ENCODE measurements at regions of chr5 and their contacts with region 1.

Region 1: DNA sequence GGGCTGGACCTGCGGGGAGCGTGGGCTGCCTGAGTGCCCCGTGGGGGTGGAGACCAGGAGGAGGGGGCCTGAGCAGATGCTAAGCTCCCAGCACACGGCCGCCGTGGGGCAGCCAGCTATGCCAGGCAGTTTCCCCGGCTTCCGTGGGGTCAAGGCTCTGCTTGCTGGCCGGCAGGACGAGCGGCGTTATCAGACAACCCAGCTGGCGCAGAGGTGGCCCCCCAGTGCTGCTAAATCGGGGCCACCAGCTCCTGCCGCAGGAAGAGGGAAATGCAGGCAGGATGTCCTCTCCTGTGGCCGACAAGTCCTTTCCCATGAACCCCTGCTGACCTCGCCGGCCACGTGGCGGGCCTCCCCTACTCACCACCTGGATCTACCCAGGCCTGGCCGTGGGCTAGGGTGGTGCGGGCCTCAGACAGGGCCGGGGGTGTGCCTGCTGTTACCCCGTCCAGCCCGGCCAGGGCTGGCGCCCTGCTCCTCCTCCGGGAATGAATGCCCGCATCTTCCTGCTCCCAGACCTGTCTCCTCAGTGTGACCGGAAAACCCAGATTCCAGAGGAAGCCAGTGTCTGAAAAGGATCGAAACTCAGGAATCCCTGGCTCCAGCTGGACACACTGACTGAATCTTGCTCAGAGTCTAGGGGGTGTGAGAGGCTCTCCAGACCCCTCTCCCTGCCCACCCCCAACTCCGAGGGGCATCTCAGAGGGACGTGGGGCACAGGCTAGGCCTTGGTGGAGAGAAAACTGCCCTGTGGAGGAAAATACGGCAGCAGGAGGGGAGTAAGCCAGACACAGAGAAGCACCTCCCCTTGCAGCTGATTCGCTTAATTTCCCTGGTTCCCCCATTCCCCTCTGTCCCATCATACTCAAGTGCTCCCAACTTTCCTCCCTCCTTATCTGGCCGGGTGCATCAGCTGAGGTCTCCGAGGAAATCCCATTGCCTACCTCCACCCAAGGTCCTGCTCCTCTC is 3.9 kb downstream of the FLT4 start:
- DNase-seq: no peak
- ATAC-seq: no peak
- H3K4me3 ChIP-seq: no peak overlapping the region
- H3K27ac ChIP-seq: no peak overlapping the region
- H3K4me1 ChIP-seq: no peaks in the 10 kb centered on the region
- H3K27me3 ChIP-seq: peaks cover 4% of the 10 kb centered on the region
- CTCF ChIP-seq: no peak

Region 2: DNA sequence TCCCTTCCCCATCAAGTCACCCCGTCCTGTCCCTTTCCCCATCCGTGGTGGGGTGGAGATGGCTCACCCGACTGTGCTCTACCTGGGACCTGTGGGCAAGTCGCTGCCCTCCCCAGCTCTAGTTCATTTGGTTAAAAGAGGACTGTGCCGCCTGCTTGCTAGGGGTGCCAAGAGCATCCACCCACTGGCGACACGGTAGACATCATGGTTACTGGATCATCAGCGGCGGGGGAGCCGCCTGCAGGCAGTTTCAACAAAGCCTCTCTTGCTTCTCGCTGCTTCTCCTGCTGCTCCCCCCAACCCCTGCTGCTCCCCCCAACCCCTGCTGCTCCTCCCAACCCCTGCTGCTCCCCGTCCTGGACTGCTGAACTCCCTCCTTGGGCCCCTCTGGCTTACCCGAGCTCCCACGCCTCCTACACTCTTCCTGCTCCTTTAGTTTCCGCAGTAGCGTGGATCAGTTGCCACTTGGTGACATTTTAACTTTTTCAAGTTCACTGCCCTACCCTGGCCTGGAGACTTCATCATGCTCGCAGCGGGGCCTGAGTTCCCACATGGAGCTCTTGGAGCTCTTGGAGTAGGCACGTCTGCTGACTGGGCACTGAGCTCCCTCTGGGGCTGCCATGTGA is 32.2 kb before region 1 on chr5:
- CTCF ChIA-PET with region 1: no interaction called
- POLR2A ChIA-PET with region 1: interaction called, 10 read pairs
- in situ Hi-C with region 1: no loop called
- intact Hi-C with region 1: no loop called
- DNase-seq: no peak
- ATAC-seq: no peak
- H3K4me3 ChIP-seq: no peak overlapping the region
- H3K27ac ChIP-seq: no peak overlapping the region
- H3K4me1 ChIP-seq: no peaks in the 10 kb centered on the region
- H3K27me3 ChIP-seq: no peaks in the 10 kb centered on the region
- CTCF ChIP-seq: no peak

Region 3: DNA sequence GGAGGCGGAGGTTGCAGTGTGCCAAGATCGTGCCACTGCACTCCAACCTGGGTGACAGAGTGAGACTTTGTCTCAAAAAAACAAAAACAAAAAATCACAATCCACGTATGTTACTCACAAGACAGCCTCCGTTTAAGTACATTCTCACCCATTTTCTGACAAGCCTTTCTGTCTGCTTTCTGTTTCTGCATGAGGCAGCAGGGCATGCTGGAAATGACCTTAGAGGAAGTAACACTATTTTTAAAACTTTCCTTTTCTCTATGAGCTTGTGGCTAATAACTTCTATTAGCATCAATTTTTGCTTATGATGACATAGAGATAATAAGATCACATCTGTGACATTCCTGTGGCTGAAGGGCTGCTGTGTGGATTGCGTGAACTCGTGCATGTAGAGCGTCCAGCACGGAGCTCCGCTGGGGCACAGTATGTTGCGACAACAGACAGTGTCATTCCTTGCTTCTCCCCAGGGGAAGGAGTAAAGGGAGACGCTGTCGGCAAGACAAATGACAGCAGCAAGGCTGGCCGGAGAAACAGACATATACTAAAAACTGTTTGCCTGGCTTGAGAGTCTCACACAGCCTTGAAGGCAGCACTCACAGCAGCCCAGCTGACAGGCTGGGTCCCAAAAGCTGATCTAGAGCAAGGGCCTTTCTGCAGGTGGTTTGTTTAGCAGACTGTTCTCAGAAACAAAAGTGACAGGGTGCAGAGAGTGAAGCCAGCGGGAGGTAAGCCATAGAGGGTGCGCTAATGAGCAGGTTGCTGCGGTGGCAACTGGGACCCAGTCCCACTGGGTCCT is 344.8 kb after region 1 on chr5:
- CTCF ChIA-PET with region 1: no interaction called
- POLR2A ChIA-PET with region 1: no interaction called
- in situ Hi-C with region 1: no loop called
- intact Hi-C with region 1: no loop called
- DNase-seq: no peak
- ATAC-seq: no peak
- H3K4me3 ChIP-seq: no peak overlapping the region
- H3K27ac ChIP-seq: no peak overlapping the region
- H3K4me1 ChIP-seq: no peaks in the 10 kb centered on the region
- H3K27me3 ChIP-seq: no peaks in the 10 kb centered on the region
- CTCF ChIP-seq: no peak

Measured in Panc1 (cell line).